ENCODE measurements at regions of chr19 and their contacts with region 1.

Region 1: DNA sequence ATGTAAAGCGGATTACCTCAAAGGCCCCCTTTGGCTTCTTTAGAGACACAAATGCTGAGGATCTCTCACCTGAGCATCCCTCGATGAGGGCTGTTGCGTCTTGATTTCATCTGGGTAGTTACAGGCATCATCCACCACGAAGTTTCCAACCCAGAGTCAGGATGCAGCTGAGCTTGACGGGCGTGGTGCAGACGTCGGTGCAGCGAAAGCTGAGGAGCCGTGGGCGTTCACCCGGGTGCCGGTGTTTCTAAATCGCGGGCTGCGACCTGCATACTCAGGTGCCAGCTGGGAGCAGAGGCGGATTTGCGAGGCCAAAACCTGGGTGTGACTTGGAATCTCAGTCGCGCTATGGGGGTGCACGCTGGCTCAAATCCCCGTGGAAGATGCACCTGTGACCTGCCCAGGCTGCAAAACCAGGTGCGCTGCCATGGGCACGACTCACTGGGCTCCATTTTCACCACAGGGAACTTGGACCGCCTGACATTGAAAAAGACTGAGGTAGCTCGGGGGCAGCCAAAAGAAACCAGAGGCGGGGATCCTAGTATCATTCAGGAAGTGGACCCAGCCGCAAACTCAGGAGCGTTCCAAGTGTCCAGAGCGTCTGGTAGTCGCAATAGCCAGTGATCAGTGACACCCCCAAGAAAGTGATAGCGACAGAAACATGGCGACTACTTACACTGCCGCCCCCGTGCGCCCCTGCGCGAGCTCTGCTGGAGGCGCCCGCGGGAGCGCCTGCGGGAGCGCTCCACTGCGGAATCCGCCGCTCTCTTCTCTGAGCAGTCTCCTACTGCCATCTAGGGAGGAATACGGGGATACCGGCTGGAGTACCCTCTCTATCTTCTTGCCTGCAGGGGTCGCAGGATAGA is 36.4 kb upstream of the IGFL4 start:
- DNase-seq: peak; percentile 90 to 92
- H3K4me3 ChIP-seq: peak overlapping the region; percentile 53
- H3K4me3 Mint-ChIP-seq: peak overlapping the region; percentile 86
- H3K27ac Mint-ChIP-seq: peak overlapping the region; percentile 57
- H3K4me1 ChIP-seq: peaks cover 5% of the 10 kb centered on the region; the same call in 1 of the 2 replicates
- H3K4me1 Mint-ChIP-seq: peaks cover 22% of the 10 kb centered on the region
- H3K27me3 ChIP-seq: no peaks in the 10 kb centered on the region
- H3K27me3 Mint-ChIP-seq: no peaks in the 10 kb centered on the region
- CTCF ChIP-seq: peak; percentile 98 to 100

Region 2: DNA sequence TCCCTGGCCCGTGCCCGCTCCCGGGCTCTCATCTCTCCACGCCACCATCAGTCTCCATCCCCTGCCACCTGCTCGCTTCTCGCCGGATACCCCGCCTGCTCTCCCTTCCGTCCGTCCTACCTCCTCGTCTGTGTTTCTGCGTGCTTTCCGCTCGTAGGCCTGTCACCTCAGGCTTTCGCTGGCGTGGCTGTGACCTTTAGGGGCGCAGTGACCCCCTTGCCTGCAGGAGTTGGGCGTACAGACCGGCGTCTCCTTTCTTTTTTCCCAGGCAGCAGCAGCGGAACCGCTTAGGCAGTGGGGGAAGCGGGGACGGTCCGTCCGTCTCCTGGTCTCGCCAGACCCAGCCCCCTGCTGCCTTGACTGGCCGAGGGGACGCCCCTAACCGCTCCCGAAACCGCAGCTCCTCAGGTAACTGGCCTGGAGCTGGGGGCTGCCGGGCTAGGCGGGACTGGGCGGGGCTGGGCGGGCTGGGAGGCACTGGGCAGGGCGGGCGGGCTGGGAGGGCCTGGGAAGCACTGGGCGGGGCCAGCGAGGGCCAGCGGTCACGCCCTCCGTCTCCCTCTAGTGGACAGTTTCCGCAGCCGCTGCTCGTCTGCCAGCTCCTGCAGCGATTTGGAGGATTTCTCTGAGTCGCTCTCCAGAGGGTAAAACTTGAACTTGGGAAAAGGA is 60.6 kb before region 1 on chr19:
- CTCF ChIA-PET with region 1: interaction called, 20 read pairs
- POLR2A ChIA-PET with region 1: no interaction called
- intact Hi-C with region 1: no loop called
- DNase-seq: peak; percentile 78 to 91
- H3K4me3 ChIP-seq: peak overlapping the region; percentile 57
- H3K4me3 Mint-ChIP-seq: peak overlapping the region; percentile 86
- H3K27ac Mint-ChIP-seq: no peak overlapping the region
- H3K4me1 ChIP-seq: peaks cover 20% of the 10 kb centered on the region
- H3K4me1 Mint-ChIP-seq: peaks cover 21% of the 10 kb centered on the region
- H3K27me3 ChIP-seq: no peaks in the 10 kb centered on the region; the same call in 1 of the 2 replicates
- H3K27me3 Mint-ChIP-seq: peaks cover 8% of the 10 kb centered on the region
- CTCF ChIP-seq: peak; percentile 93 to 95

Region 3: DNA sequence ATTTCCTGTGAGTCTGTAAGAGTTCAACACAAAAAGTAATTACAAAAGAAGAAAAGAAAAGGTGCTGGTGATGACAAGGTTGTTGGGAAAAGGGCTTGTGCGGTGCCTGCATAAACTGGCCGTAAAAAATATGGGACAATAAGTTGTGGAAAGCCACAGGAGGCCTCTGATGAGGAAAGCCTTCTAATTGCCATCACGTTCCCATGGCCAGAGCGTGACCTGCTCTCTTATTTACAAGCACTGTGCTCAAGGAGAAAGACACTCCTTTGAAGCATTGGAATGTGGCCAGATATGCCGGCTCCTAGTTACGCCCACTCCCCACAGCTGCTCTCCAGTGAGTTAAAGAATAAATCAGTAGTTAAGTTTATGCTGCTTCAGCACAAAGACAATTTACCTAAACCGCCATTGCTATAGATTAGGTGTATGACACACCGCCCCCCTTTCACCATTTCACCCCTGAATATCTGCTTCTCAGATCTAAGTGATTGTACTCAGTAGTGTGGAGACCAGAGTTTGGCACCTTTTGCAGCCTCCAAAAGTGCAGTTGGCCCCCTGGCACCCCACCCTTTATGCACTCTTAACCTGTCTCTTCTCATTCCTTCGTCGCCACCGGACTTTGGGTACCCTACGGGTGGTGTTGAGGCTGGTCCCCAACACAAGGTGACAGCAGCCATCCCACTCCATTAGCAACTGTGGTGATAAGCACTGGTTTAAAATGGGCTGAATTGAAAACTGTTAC is 46.2 kb before region 1 on chr19:
- CTCF ChIA-PET with region 1: interaction called, 156 read pairs
- POLR2A ChIA-PET with region 1: interaction called, 4 read pairs
- intact Hi-C with region 1: loop called (anchors 1 kb)
- DNase-seq: peak; percentile 71 to 82
- H3K4me3 ChIP-seq: no peak overlapping the region
- H3K4me3 Mint-ChIP-seq: peak overlapping the region; percentile 43
- H3K27ac Mint-ChIP-seq: peak overlapping the region; percentile 33
- H3K4me1 ChIP-seq: peaks cover 37% of the 10 kb centered on the region
- H3K4me1 Mint-ChIP-seq: peaks cover 32% of the 10 kb centered on the region
- H3K27me3 ChIP-seq: no peaks in the 10 kb centered on the region
- H3K27me3 Mint-ChIP-seq: no peaks in the 10 kb centered on the region
- CTCF ChIP-seq: no peak

Region 4: GRCh38 chr19:46192992-46193650 is 115.9 kb after region 1 on chr19:
- CTCF ChIA-PET with region 1: interaction called, 21 read pairs
- POLR2A ChIA-PET with region 1: no interaction called
- intact Hi-C with region 1: loop called (anchors 1 kb)
- DNase-seq: peak; percentile 83 to 85
- H3K4me3 ChIP-seq: no peak overlapping the region
- H3K4me3 Mint-ChIP-seq: peak overlapping the region; percentile 56
- H3K27ac Mint-ChIP-seq: peak overlapping the region; percentile 87
- H3K4me1 ChIP-seq: peaks cover 33% of the 10 kb centered on the region
- H3K4me1 Mint-ChIP-seq: peaks cover 41% of the 10 kb centered on the region
- H3K27me3 ChIP-seq: no peaks in the 10 kb centered on the region
- H3K27me3 Mint-ChIP-seq: no peaks in the 10 kb centered on the region
- CTCF ChIP-seq: no peak

Region 5: GRCh38 chr19:46265217-46265828 is 188.1 kb after region 1 on chr19:
- CTCF ChIA-PET with region 1: interaction called, 59 read pairs
- POLR2A ChIA-PET with region 1: no interaction called
- intact Hi-C with region 1: loop called (anchors 1 kb)
- DNase-seq: peak; percentile 80 to 89
- H3K4me3 ChIP-seq: no peak overlapping the region
- H3K4me3 Mint-ChIP-seq: no peak overlapping the region
- H3K27ac Mint-ChIP-seq: no peak overlapping the region
- H3K4me1 ChIP-seq: peaks cover 4% of the 10 kb centered on the region
- H3K4me1 Mint-ChIP-seq: no peaks in the 10 kb centered on the region
- H3K27me3 ChIP-seq: no peaks in the 10 kb centered on the region
- H3K27me3 Mint-ChIP-seq: no peaks in the 10 kb centered on the region
- CTCF ChIP-seq: peak; percentile 74 to 96